Activated naive CD4-positive, alpha-beta T cell treated with anti-CD3 and anti-CD28 coated beads for 36 hours (primary cell): ENCODE measurements at regions of chr11 and their contacts with region 1.

Region 1: GRCh38 chr11:86138958-86139357 is 70.1 kb upstream of the PICALM start:
- DNase-seq: peak; percentile 48
- H3K4me3 Mint-ChIP-seq: no peak overlapping the region
- H3K27ac Mint-ChIP-seq: peak overlapping the region; percentile 25
- H3K4me1 Mint-ChIP-seq: peaks cover 13% of the 10 kb centered on the region
- H3K27me3 Mint-ChIP-seq: no peaks in the 10 kb centered on the region

Region 2: GRCh38 chr11:86116386-86116726 is 22.6 kb before region 1 on chr11:
- CTCF ChIA-PET with region 1: interaction called, 4 read pairs
- intact Hi-C with region 1: loop called (anchors 1 kb)
- DNase-seq: peak; percentile 57
- H3K4me3 Mint-ChIP-seq: no peak overlapping the region
- H3K27ac Mint-ChIP-seq: peak overlapping the region; percentile 17
- H3K4me1 Mint-ChIP-seq: peaks cover 28% of the 10 kb centered on the region
- H3K27me3 Mint-ChIP-seq: peaks cover 5% of the 10 kb centered on the region

Region 3: DNA sequence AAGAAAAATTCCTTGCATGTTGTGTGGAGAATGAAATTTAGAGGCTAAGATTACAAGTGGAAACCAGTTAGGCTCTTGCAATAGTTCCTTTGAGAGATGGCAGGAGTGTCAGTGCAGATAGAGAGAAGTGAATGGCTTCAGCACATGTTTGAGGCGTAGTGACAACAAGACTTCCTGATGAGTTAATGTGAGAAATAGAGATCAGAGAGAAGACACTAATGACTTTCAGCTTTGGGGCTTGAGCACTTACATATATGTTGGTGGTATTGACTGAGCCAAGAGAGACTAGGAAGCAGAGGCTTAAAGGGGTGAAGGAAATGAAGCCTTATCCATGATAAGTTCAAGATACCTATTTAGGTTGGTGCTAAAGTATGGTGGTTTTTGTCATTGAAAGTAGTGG is 14.1 kb before region 1 on chr11:
- CTCF ChIA-PET with region 1: no interaction called
- intact Hi-C with region 1: loop called (anchors 1 kb)
- DNase-seq: peak; percentile 13
- H3K4me3 Mint-ChIP-seq: no peak overlapping the region
- H3K27ac Mint-ChIP-seq: peak overlapping the region; percentile 2
- H3K4me1 Mint-ChIP-seq: peaks cover 23% of the 10 kb centered on the region
- H3K27me3 Mint-ChIP-seq: peaks cover 11% of the 10 kb centered on the region